Activated CD8-positive, alpha-beta T cell treated with anti-CD3 and anti-CD28 coated beads, Interleukin-2, amount 10 ng/mL, durations not matched to agents 7 days and 5 days (primary cell): ENCODE measurements at regions of chr19 and their contacts with region 1.

Region 1: GRCh38 chr19:246541-246940 is 44.7 kb downstream of the PLPP2 start:
- DNase-seq: peak; percentile 34
- ATAC-seq: no peak
- H3K4me3 Mint-ChIP-seq: no peak overlapping the region
- H3K27ac Mint-ChIP-seq: no peak overlapping the region
- H3K4me1 Mint-ChIP-seq: no peaks in the 10 kb centered on the region
- H3K27me3 Mint-ChIP-seq: no peaks in the 10 kb centered on the region

Region 2: GRCh38 chr19:262125-262524 is 15.6 kb after region 1 on chr19:
- CTCF ChIA-PET with region 1: interaction called, 11 read pairs
- POLR2A ChIA-PET with region 1: no interaction called
- DNase-seq: no peak
- ATAC-seq: no peak
- H3K4me3 Mint-ChIP-seq: no peak overlapping the region
- H3K27ac Mint-ChIP-seq: no peak overlapping the region
- H3K4me1 Mint-ChIP-seq: peaks cover 6% of the 10 kb centered on the region
- H3K27me3 Mint-ChIP-seq: peaks cover 20% of the 10 kb centered on the region